Endothelial cell of umbilical vein (primary cell): ENCODE measurements at regions of chr10 and their contacts with region 1.

Region 1: GRCh38 chr10:74117738-74118137 is 32.9 kb downstream of the AP3M1 start:
- DNase-seq: no peak
- H3K4me3 ChIP-seq: no peak overlapping the region
- H3K27ac ChIP-seq: no peak overlapping the region
- H3K4me1 ChIP-seq: peaks cover 5% of the 10 kb centered on the region
- H3K27me3 ChIP-seq: no peaks in the 10 kb centered on the region
- CTCF ChIP-seq: no peak
- POLR2A ChIP-seq: no peak

Region 2: GRCh38 chr10:74103560-74104248 is 14.0 kb before region 1 on chr10:
- CTCF ChIA-PET with region 1: interaction called, 11 read pairs
- POLR2A ChIA-PET with region 1: no interaction called
- dilution Hi-C with region 1: no loop called
- intact Hi-C with region 1: no loop called
- DNase-seq: peak; percentile 37
- H3K4me3 ChIP-seq: no peak overlapping the region
- H3K27ac ChIP-seq: no peak overlapping the region
- H3K4me1 ChIP-seq: no peaks in the 10 kb centered on the region
- H3K27me3 ChIP-seq: no peaks in the 10 kb centered on the region
- CTCF ChIP-seq: peak; percentile 24 to 41
- POLR2A ChIP-seq: no peak